ENCODE measurements at regions of chr3 and their contacts with region 1.

Region 1: GRCh38 chr3:32947789-32948238 is 3.6 kb upstream of the CCR4 start:
- DNase-seq: peak; percentile 72 to 77
- ATAC-seq: peak; percentile 61 to 92 (median 84)
- H3K4me3 ChIP-seq: no peak overlapping the region
- H3K27ac ChIP-seq: no peak overlapping the region
- H3K4me1 ChIP-seq: peaks cover 0 to 7% (median 0%) of the 10 kb centered on the region in 9 donors
- H3K27me3 ChIP-seq: no peaks in the 10 kb centered on the region
- CTCF ChIP-seq: peak; percentile 19 to 81 (median 67)

Region 2: DNA sequence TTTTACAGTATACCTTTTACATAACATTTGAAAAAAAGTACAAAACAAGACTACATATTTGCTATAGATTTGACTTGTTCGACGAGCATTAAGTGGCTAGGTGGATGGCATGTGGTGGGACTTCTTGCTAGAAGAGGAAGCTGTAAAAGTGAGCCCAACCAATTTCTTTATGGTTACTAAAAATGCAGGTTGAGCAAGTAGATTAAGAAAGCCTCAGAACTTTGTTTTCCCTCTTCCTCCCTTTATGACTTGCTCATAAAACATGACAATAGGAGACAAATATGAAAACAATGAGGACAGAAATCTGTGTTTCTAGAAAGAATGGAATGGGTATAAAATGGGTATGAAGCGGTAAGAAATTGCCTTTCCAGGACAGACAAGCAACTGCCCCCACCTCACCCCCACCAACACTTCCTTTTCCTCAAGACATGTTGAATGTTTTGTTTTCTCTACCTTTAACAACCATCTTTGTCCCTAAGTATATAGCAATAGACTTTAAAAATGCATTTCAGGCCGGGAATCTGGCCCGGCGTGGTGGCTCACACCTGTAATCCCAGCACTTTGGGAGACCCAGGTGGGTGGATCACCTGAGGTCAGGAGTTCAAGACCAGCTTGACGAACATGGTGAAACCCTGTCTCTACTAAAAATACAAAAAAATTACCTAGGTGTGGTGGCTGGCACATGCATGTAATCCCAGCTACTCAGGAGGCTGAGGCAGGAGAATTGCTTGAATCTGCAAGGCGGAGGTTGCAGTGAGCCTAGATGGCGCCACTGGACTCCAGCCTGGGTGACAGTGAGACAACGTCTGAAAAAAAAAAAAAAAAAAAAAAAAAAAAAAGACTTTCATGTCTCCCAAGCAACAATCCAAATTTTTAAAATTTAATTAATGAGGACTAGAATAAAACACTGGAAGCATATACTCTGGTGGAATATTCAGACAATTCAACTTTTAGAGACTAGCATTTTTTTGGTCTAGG is 46.1 kb before region 1 on chr3:
- intact Hi-C with region 1: no loop called
- DNase-seq: no peak
- ATAC-seq: no peak
- H3K4me3 ChIP-seq: no peak overlapping the region
- H3K27ac ChIP-seq: no peak overlapping the region
- H3K4me1 ChIP-seq: peaks cover 0 to 5% (median 0%) of the 10 kb centered on the region in 9 donors
- H3K27me3 ChIP-seq: peaks cover 0 to 54% (median 27%) of the 10 kb centered on the region in 7 donors
- CTCF ChIP-seq: peak in 2 of 9 donors; percentile 22 to 37

Region 3: DNA sequence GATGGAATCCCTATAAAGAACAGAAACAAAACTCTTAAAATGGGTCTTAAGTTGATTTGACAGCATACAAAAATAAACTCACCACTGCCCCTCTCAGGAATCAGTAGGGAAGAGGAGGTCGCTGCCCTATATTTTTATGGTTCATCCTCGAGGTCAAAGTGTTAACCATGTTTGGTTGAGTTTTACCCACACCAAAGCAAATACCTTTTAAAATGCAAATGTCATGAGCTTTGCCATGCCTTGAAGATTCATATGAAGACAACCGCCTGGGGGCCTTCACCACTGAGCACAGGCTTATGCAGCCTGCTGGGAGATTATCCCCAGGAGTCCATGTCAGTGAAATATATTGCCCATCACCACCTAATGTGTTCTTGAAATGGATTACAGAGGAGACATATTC is 83.0 kb after region 1 on chr3:
- intact Hi-C with region 1: no loop called
- DNase-seq: no peak
- ATAC-seq: no peak
- H3K4me3 ChIP-seq: no peak overlapping the region
- H3K27ac ChIP-seq: no peak overlapping the region
- H3K4me1 ChIP-seq: no peaks in the 10 kb centered on the region
- H3K27me3 ChIP-seq: no peaks in the 10 kb centered on the region
- CTCF ChIP-seq: peak in 1 of 9 donors; percentile 8

Region 4: GRCh38 chr3:33063651-33064051 is 115.8 kb after region 1 on chr3:
- intact Hi-C with region 1: loop called in 1 of 10 experiments (anchors 10 kb)
- DNase-seq: no peak
- ATAC-seq: no peak
- H3K4me3 ChIP-seq: no peak overlapping the region
- H3K27ac ChIP-seq: peak overlapping the region in 1 of 10 donors; percentile 10
- H3K4me1 ChIP-seq: peaks cover 0 to 8% (median 0%) of the 10 kb centered on the region in 9 donors
- H3K27me3 ChIP-seq: no peaks in the 10 kb centered on the region
- CTCF ChIP-seq: no peak

Region 5: DNA sequence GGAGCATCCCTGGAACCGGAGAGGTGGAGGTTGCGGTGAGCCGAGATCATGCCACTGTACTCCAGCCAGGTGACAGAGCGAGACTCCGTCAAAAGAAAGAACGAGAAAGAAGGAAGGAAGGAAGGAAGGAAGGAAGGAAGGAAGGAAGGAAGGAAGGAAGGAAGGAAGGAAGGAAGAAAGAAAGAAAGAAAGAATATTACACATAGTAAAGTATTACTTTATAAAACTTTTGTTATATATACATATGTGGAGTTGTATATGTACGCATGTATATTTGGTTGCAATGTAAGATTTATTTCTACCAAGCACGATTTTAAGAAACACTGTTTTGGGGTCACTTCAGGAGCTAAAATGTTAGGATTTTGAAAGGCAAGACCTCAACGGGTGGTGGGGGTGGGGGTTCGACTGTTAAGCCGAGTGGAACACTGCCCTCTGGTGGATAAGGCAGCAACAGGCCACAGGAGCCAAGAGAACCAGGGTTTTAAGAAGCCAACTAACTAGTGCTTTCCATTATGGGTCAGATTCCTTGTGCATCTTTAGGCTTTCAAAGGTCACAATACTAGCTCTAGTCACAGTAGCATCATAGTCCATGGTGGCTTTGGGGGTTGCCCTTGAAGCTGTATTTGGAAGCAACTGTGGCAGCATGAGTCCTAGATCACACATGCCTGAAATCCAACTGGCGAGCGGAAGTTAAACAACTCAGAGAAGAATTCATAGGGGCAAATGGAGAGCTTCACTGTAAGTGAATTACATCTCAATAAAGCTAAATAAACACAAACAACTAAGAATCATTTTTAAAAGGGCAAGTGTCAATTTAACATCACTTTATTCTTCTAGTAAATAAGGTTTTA is 126.6 kb after region 1 on chr3:
- intact Hi-C with region 1: loop called in 8 of 10 experiments (anchors 2 to 10 kb)
- DNase-seq: peak; percentile 29 to 47
- ATAC-seq: peak in 6 of 8 donors; percentile 42 to 79 (median 65)
- H3K4me3 ChIP-seq: no peak overlapping the region
- H3K27ac ChIP-seq: no peak overlapping the region
- H3K4me1 ChIP-seq: peaks cover 0 to 10% (median 0%) of the 10 kb centered on the region in 9 donors
- H3K27me3 ChIP-seq: no peaks in the 10 kb centered on the region
- CTCF ChIP-seq: peak; percentile 69 to 90 (median 80)

Region 6: DNA sequence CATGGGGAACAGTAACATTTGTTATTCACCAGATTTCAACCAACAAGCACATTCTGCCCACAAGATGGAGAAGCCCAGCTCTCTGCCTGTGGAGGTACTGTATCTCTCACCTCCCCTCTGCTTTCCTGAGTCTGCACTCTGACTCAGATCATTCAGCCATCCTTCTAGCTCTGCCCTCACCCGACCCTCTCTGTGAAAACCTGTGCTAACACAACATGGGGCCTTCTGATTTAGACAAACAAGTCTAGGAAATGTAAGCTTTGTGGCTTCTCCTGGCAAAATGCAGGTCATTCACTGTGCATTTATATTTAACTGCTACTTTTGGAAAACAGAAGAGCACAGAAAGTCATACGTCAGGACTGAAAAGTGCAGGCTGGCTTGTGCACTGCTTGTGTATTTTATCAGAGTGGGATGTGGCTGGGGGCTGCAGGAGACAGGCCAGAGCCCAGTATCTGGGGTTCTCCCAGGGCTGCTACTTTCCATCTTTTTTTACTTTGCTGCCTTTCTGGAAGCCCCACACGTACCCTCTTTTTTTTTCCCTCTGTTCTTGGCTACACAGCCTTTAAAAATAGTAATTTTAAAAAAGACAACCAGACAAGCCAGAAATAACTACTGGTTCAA is 220.0 kb after region 1 on chr3:
- intact Hi-C with region 1: no loop called
- DNase-seq: no peak
- ATAC-seq: no peak
- H3K4me3 ChIP-seq: no peak overlapping the region
- H3K27ac ChIP-seq: no peak overlapping the region
- H3K4me1 ChIP-seq: peaks cover 0 to 18% (median 5%) of the 10 kb centered on the region in 9 donors
- H3K27me3 ChIP-seq: no peaks in the 10 kb centered on the region
- CTCF ChIP-seq: no peak

Region 7: DNA sequence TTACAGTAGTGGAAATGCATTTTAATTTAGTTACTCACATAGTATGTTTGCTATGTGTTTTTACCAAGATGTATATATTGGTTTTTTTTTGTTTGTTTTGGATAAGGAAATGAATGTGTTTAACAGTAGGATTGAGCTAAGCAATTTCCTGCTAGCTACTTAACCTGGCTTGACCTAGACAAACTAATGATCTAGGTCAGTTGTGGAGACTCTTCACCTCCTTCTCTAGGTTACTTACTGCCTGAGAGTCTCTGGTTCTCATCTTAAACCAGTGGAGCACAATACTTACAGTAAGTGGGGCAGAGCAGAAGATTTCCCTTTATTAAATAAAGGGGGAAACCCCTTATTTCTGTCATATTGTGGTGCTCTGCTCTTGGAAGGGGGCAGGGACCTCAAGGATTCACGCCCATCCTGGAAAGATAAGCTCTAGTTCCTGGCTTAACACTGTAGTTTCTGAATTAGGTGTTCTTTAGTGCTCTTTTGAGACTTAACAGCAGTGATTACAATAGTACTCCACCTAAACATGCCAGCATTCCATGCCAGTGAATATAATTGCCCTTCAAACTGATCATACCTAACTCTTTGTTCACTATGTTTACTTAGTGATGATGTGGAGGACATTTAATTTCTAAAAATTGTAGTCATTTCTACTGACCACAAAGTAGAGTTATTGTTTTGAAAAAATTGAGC is 412.5 kb after region 1 on chr3:
- intact Hi-C with region 1: loop called in 1 of 10 experiments (anchors 10 kb)
- DNase-seq: no peak
- ATAC-seq: no peak
- H3K4me3 ChIP-seq: no peak overlapping the region
- H3K27ac ChIP-seq: no peak overlapping the region
- H3K4me1 ChIP-seq: peaks cover 0 to 8% (median 2%) of the 10 kb centered on the region in 9 donors
- H3K27me3 ChIP-seq: no peaks in the 10 kb centered on the region
- CTCF ChIP-seq: no peak

Region 8: GRCh38 chr3:33372218-33373081 is 424.6 kb after region 1 on chr3:
- intact Hi-C with region 1: loop called in 8 of 10 experiments (anchors 2 to 10 kb)
- DNase-seq: peak in 1 of 2 donors; percentile 34
- ATAC-seq: peak; percentile 43 to 74 (median 62)
- H3K4me3 ChIP-seq: no peak overlapping the region
- H3K27ac ChIP-seq: no peak overlapping the region
- H3K4me1 ChIP-seq: peaks cover 0 to 9% (median 0%) of the 10 kb centered on the region in 9 donors
- H3K27me3 ChIP-seq: no peaks in the 10 kb centered on the region
- CTCF ChIP-seq: peak; percentile 88 to 94 (median 91)

Measured in heart right ventricle (tissue), 16 donors.